SK-N-SH (cell line): ENCODE measurements at regions of chr2 and their contacts with region 1.

Region 1: DNA sequence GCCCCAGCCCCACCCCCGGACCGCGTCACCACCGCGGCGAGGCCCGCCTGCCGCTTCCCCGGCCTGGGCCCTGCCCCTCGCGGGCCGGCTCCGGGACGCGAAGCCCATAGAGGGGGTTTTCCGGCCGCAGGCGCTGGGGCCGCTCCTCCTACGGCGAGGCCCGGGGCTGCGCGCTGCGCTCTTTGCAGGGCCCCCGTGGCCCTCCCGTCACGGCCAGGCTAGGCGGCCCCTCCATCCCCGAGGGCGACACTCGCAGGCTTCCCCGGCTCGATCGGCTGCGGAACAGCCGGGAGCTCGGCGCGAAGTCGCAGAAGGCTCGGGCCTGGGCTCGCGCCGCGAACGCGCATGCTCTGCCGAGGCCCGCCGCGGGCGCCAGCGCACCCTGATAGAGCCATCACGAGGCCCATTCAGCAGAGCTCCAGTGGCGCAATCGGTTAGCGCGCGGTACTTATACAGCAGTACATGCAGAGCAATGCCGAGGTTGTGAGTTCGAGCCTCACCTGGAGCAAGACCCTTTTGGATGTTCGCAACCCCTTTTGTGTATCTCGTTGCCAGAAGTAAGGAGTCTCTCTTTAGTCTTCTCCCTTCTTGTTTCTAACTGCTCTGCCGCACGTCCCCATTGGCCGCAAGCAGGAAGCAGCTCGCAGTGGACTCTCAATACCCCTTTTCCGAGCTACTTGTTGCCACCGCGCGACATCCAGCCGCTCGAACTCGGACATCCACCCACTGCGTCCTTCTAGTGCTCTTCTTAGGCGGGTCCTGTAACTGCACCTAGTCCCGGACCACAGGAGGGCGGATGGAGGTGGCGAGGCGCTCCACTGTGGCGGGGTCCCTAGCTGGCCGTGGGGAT is 18.0 kb upstream of the HAAO start:
- DNase-seq: peak; percentile 97
- H3K4me3 ChIP-seq: peak overlapping the region; percentile 67 to 75
- H3K27ac ChIP-seq: peak overlapping the region; percentile 95 to 99
- H3K4me1 ChIP-seq: peaks cover 0 to 17% of the 10 kb centered on the region in 2 experiments; a peak in 1 of 4 replicates
- H3K27me3 ChIP-seq: no peaks in the 10 kb centered on the region
- CTCF ChIP-seq: no peak
- EP300 ChIP-seq: peak in 1 of 2 experiments; percentile 76; a peak in 1 of 4 replicates
- RAD21 ChIP-seq: no peak

Region 2: DNA sequence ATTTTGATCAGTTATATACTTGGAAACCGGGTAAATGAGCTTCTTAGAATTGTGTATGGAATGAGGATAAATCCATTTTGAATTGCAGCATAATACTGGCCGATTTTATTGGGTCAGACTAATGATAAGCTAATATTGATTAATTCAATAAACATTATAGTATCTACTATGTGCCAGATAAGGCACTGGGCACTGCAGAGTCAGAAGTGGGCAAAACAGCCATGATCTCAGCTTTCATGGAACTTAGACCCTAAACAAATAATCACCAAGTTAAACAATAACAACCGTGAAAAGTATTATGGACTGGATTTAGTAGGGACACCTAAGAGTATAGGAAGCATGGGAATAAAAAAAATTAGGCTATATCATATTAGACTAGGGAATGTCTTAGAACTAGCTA is 1059.5 kb before region 1 on chr2:
- CTCF ChIA-PET with region 1: no interaction called
- POLR2A ChIA-PET with region 1: no interaction called
- DNase-seq: no peak
- H3K4me3 ChIP-seq: no peak overlapping the region
- H3K27ac ChIP-seq: no peak overlapping the region
- H3K4me1 ChIP-seq: no peaks in the 10 kb centered on the region
- H3K27me3 ChIP-seq: no peaks in the 10 kb centered on the region
- CTCF ChIP-seq: no peak
- EP300 ChIP-seq: no peak
- RAD21 ChIP-seq: no peak

Region 3: DNA sequence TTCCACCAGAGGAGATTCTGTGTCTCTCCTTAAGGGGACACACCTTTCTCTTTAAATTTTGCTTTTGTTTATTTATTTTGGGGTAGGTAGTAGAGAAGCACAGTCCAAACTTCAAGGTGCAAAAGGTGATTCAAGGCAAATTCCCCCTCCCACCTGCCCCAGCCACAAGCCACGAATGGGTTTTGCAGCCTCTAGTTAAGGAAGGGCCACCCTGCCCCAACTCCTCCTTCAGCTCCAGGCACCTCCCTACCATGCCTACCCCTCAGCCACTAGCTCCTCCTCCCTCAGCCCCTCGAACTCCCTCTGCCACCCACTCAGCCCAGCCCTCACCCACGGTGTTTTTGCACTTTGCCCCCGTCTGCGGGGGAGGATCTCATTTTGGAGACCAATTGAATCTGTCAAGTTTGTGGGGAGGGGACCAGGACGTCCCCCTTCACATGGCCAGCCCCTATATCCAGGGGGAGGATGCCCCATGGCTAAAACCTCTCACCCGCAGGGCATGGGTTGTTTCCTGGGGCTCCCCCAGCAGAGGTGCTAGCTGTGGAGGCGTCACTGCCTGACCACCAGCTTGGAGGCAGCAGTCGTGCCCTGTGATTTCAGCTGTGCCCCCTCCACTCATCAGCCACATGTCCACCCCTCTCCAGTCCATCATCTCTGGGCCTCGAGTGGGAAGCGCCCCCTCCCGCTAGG is 22.4 kb before region 1 on chr2:
- CTCF ChIA-PET with region 1: interaction called, 7 read pairs
- POLR2A ChIA-PET with region 1: interaction called, 15 read pairs
- DNase-seq: no peak
- H3K4me3 ChIP-seq: no peak overlapping the region
- H3K27ac ChIP-seq: no peak overlapping the region
- H3K4me1 ChIP-seq: peaks cover 0 to 31% of the 10 kb centered on the region in 2 experiments; a peak in 1 of 4 replicates
- H3K27me3 ChIP-seq: no peaks in the 10 kb centered on the region
- CTCF ChIP-seq: no peak
- EP300 ChIP-seq: no peak
- RAD21 ChIP-seq: no peak

Region 4: GRCh38 chr2:43595603-43596412 is 785.5 kb after region 1 on chr2 and contains the start of gene THADA:
- CTCF ChIA-PET with region 1: no interaction called
- POLR2A ChIA-PET with region 1: interaction called, 13 read pairs
- DNase-seq: peak; percentile 97
- H3K4me3 ChIP-seq: peak within 1 kb of the TSS; percentile 77 to 88
- H3K27ac ChIP-seq: peak within 1 kb of the TSS; percentile 89 to 98
- H3K4me1 ChIP-seq: peaks cover 7 to 11% of the 10 kb centered on the region in 2 experiments; a peak in 3 of 4 replicates
- H3K27me3 ChIP-seq: no peaks in the 10 kb centered on the region
- CTCF ChIP-seq: no peak
- EP300 ChIP-seq: no peak; a peak in 1 of 4 replicates
- RAD21 ChIP-seq: no peak
- polyA plus RNA-seq, gene THADA: 17.1 and 25.6 TPM in 2 replicates